HepG2 (cell line): ENCODE measurements at regions of chr15 and their contacts with region 1.

Region 1: GRCh38 chr15:23708332-23708731 is 21.2 kb upstream of the NDN start:
- DNase-seq: no peak
- ATAC-seq: no peak
- H3K4me3 ChIP-seq: no peak overlapping the region
- H3K27ac ChIP-seq: no peak overlapping the region
- H3K4me1 ChIP-seq: no peaks in the 10 kb centered on the region
- H3K27me3 ChIP-seq: no peaks in the 10 kb centered on the region
- CTCF ChIP-seq: no peak
- EP300 ChIP-seq: no peak
- POLR2A ChIP-seq: no peak
- RAD21 ChIP-seq: no peak

Region 2: GRCh38 chr15:22831473-22831872 is 876.9 kb before region 1 on chr15:
- CTCF ChIA-PET with region 1: no interaction called
- POLR2A ChIA-PET with region 1: no interaction called
- in situ Hi-C with region 1: no loop called
- intact Hi-C with region 1: no loop called
- DNase-seq: no peak
- ATAC-seq: no peak
- H3K4me3 ChIP-seq: no peak overlapping the region
- H3K27ac ChIP-seq: no peak overlapping the region
- H3K4me1 ChIP-seq: 0 out of 2 replicates have a peak, but pooled peaks cover 6% of the 10 kb centered on the region
- H3K27me3 ChIP-seq: no peaks in the 10 kb centered on the region
- CTCF ChIP-seq: no peak
- EP300 ChIP-seq: no peak
- POLR2A ChIP-seq: no peak
- RAD21 ChIP-seq: no peak

Region 3: DNA sequence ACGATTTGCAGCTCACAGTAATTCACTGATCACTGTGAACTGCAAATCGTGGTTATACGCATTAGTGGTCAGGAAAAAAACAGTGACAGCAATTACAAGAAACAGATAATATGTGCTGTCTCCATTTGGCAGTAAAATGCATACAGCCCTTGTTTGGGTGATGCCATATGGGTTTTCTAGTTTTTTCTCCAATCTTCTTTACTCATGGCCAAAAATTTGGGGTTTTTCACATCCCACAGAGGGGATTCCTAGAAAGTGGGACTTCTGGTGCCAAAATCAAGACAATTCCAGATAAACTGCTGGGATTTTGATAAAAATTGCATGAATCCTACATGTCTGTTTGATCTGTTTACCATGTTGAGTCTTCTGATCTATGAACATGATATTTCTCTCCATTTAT is 36.9 kb before region 1 on chr15:
- CTCF ChIA-PET with region 1: no interaction called
- POLR2A ChIA-PET with region 1: no interaction called
- in situ Hi-C with region 1: no loop called
- intact Hi-C with region 1: loop called (anchors 5 kb)
- DNase-seq: no peak
- ATAC-seq: no peak
- H3K4me3 ChIP-seq: no peak overlapping the region
- H3K27ac ChIP-seq: no peak overlapping the region
- H3K4me1 ChIP-seq: 0 out of 2 replicates have a peak, but pooled peaks cover 8% of the 10 kb centered on the region
- H3K27me3 ChIP-seq: no peaks in the 10 kb centered on the region
- CTCF ChIP-seq: no peak
- EP300 ChIP-seq: no peak
- POLR2A ChIP-seq: no peak
- RAD21 ChIP-seq: no peak

Region 4: GRCh38 chr15:23690450-23690852 is 17.9 kb before region 1 on chr15:
- CTCF ChIA-PET with region 1: no interaction called
- POLR2A ChIA-PET with region 1: interaction called, 19 read pairs
- in situ Hi-C with region 1: no loop called
- intact Hi-C with region 1: no loop called
- DNase-seq: peak; percentile 93
- ATAC-seq: peak; percentile 96
- H3K4me3 ChIP-seq: no peak overlapping the region; a peak in 1 of 6 replicates
- H3K27ac ChIP-seq: peak overlapping the region; percentile 67
- H3K4me1 ChIP-seq: peaks cover 27% of the 10 kb centered on the region
- H3K27me3 ChIP-seq: no peaks in the 10 kb centered on the region
- CTCF ChIP-seq: no peak
- EP300 ChIP-seq: peak in 1 of 2 experiments; percentile 90; a peak in 3 of 4 replicates
- POLR2A ChIP-seq: no peak
- RAD21 ChIP-seq: no peak